ENCODE measurements at regions of chr6 and their contacts with region 1.

Region 1: DNA sequence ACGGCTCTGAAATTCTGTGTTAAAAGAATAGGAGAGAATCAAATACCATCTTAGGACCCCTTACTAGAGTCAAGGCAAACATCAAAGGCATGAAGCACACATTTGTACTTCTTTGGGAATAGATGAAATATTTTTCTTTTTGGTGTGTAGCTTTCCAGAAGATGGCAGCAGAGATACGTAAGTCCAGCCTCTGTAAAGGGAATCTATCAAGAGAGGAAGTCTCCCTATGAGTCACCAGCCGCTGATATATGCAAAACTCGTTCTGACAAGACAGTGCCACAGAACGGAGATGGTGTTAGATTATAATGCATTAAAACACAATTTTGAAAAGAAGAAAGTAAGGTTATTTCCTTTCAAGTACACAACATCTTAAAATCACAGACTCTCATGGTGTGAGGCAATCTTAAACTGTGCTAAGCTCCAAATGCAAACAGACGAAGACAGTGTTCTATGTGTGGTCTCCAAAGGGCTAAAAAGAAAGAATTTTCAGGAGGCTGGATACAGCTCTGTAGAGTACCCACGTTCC is 120.0 kb upstream of the AGPAT4 start:
- DNase-seq: no peak
- H3K4me3 ChIP-seq: no peak overlapping the region; the same call in 1 of the 2 replicates
- H3K27ac ChIP-seq: no peak overlapping the region
- H3K27me3 ChIP-seq: peaks cover 2% of the 10 kb centered on the region
- CTCF ChIP-seq: peak; percentile 71

Region 2: DNA sequence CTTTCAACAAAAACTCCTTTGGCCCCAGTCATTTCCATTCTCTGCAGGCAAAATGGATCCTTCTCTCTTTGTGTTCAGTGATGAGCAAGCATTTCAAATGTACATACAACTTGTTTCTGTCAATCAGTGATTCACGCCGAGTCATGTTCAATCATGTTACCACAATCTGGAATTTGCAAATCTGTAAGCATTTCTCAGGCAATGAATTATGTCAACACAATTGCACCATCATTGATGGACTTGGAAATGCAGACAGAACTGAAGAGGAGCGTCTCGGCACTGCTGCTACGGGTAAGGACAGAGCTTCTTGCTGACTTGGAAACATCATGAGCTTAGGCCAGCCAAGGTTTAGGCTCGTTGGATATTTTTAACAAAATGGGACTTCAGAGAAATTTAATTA is 12.7 kb after region 1 on chr6:
- CTCF ChIA-PET with region 1: interaction called, 15 read pairs
- POLR2A ChIA-PET with region 1: no interaction called
- DNase-seq: peak; percentile 52
- H3K4me3 ChIP-seq: no peak overlapping the region
- H3K27ac ChIP-seq: peak overlapping the region; percentile 42
- H3K27me3 ChIP-seq: no peaks in the 10 kb centered on the region
- CTCF ChIP-seq: no peak

Region 3: GRCh38 chr6:161498359-161498758 is 104.5 kb after region 1 on chr6:
- CTCF ChIA-PET with region 1: interaction called, 25 read pairs
- POLR2A ChIA-PET with region 1: no interaction called
- DNase-seq: no peak
- H3K4me3 ChIP-seq: no peak overlapping the region
- H3K27ac ChIP-seq: no peak overlapping the region
- H3K27me3 ChIP-seq: peaks cover under 1% of the 10 kb centered on the region
- CTCF ChIP-seq: peak; percentile 45

Region 4: DNA sequence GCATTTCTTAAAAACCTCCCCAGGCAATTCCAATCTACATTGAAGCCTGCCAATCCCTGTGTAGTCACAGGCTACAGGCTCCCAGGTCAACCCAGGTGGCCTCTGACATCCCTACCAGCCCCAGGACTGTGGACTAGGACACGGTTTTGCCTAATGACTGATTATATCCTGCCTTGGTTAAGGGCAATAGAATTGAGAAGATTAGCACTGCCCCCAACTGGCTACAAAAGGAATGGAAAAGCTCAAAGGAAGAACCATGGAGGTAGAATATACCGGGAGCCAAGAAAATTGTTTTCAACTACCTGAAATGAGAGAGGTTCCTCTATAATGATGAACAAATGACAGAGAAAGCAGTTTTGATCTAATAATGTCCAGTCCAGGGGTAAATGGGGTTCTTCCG is 301.1 kb after region 1 on chr6:
- CTCF ChIA-PET with region 1: interaction called, 50 read pairs
- POLR2A ChIA-PET with region 1: no interaction called
- DNase-seq: no peak
- H3K4me3 ChIP-seq: no peak overlapping the region
- H3K27ac ChIP-seq: no peak overlapping the region
- H3K27me3 ChIP-seq: no peaks in the 10 kb centered on the region
- CTCF ChIP-seq: peak; percentile 60

Region 5: DNA sequence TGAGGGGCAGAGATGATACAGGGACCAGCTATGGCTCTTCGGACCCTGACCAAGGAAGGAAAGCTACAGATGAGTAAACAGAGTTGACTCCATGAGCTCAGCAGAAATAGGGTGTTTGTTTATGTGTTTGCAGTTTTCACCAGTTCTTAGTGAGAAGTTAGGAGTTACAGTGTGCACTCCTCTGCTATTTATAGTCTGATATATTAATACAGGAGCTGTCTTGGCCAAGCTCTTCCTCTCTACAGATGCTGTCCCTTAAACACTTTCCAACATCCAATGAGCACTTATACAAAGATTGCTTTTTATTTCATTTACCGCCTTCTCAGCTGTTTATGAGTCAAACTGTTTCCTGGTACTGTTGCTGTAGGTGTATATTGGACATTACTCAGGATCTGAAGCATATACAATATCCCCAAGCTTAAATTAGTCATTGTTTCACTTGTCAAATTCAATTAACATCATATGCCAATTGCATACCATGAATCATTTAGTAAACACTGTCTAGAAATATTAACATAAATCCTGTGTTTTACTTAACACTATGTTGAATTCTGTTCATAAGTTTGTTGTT is 715.7 kb after region 1 on chr6:
- CTCF ChIA-PET with region 1: no interaction called
- POLR2A ChIA-PET with region 1: no interaction called
- DNase-seq: no peak
- H3K4me3 ChIP-seq: no peak overlapping the region
- H3K27ac ChIP-seq: no peak overlapping the region
- H3K27me3 ChIP-seq: no peaks in the 10 kb centered on the region
- CTCF ChIP-seq: no peak

Measured in AG04450 (cell line).